Panc1 (cell line): ENCODE measurements at regions of chr5 and their contacts with region 1.

Region 1: GRCh38 chr5:54401515-54401914 is 54.0 kb upstream of the HSPB3 start:
- DNase-seq: no peak
- ATAC-seq: no peak
- H3K4me3 ChIP-seq: no peak overlapping the region
- H3K27ac ChIP-seq: no peak overlapping the region
- H3K4me1 ChIP-seq: no peaks in the 10 kb centered on the region
- H3K27me3 ChIP-seq: no peaks in the 10 kb centered on the region
- CTCF ChIP-seq: no peak

Region 2: DNA sequence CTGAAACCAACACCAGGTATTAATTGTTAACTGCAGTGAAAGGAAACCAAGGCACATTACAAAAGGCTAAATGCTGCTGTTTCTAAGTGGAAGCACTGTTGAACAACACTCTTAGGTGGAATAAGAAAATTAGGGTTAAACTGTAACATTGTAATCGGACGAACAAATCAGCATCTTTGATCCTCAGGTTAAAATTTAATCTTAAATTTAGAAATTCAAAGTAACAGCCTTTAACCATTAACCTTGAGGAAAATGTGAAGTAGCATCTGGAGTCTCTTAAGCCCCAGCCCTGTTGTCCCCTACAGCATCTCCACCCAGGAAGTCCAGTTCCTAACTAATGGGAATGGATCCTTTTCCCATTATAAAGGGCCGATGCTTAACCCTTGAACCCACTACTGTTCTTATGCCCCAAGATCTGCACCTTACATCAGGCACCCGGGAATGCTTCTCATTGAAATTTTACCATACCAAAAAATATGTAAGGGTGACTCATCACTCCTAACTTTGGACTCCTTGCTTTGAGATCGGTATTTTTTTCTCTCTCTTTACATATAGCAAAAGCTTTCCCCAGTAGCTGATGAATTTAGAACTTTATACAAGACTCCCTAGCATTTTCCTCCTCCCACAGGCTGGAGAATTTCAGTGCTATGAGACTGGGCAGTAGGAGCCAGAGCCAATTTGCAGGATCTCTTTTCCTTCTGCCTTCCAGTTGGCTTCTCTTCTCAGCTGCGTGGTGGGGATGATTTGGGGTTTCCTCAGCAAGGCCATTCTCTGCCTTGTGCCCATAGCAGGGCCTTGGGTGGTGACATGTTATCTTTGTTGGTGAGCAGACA is 1444.4 kb before region 1 on chr5:
- CTCF ChIA-PET with region 1: no interaction called
- POLR2A ChIA-PET with region 1: no interaction called
- in situ Hi-C with region 1: no loop called
- intact Hi-C with region 1: loop called (anchors 5 kb)
- DNase-seq: no peak
- ATAC-seq: no peak
- H3K4me3 ChIP-seq: no peak overlapping the region
- H3K27ac ChIP-seq: no peak overlapping the region
- H3K4me1 ChIP-seq: no peaks in the 10 kb centered on the region
- H3K27me3 ChIP-seq: no peaks in the 10 kb centered on the region
- CTCF ChIP-seq: no peak

Region 3: DNA sequence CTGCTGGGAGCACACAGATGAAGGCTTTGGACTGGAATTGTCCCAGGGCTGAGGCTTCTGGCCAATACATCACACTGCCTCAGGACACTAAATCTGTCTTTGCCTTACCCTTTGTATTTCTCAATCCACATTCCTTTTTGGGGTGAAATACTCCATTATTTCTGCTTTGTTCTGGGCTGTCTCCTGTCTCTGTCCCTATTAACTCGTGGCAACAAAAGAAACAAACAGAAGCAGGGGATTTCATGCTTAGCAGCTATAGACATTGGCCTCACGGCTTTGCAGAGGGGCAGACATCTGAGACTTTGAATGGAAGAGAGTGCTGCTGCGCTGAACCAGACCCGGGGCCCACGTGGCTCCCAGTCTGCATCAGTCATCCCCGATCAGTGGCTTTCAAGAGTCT is 220.9 kb before region 1 on chr5:
- CTCF ChIA-PET with region 1: no interaction called
- POLR2A ChIA-PET with region 1: no interaction called
- in situ Hi-C with region 1: no loop called
- intact Hi-C with region 1: no loop called
- DNase-seq: no peak
- ATAC-seq: no peak
- H3K4me3 ChIP-seq: no peak overlapping the region
- H3K27ac ChIP-seq: no peak overlapping the region
- H3K4me1 ChIP-seq: no peaks in the 10 kb centered on the region
- H3K27me3 ChIP-seq: no peaks in the 10 kb centered on the region
- CTCF ChIP-seq: no peak

Region 4: DNA sequence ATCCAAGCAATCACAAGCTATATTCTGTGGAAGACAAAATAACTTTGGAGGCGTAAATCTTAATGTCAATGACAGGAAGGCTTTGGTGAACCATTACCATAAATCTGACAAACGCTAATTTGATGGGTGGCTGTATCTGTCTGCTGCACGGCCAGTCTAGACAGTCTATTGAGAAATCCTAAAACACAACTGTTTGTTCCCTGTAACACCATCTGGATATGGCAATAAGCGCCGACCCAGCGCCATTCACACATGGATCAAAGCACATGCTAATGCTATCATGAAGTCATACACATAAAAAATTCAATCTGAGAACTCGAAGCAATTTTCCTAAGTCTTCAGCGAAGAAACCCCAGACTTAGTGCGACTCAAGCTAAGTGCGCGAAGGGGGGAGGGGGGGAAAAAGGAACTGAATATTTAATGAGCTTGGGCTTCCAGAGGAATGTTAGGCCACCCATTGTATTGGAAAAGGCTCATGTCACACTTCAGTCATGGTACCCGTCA is 186.2 kb before region 1 on chr5:
- CTCF ChIA-PET with region 1: no interaction called
- POLR2A ChIA-PET with region 1: no interaction called
- in situ Hi-C with region 1: no loop called
- intact Hi-C with region 1: no loop called
- DNase-seq: no peak
- ATAC-seq: no peak
- H3K4me3 ChIP-seq: no peak overlapping the region
- H3K27ac ChIP-seq: no peak overlapping the region
- H3K4me1 ChIP-seq: no peaks in the 10 kb centered on the region
- H3K27me3 ChIP-seq: no peaks in the 10 kb centered on the region
- CTCF ChIP-seq: no peak

Region 5: GRCh38 chr5:54991416-54991815 is 589.9 kb after region 1 on chr5:
- CTCF ChIA-PET with region 1: interaction called, 17 read pairs
- POLR2A ChIA-PET with region 1: no interaction called
- in situ Hi-C with region 1: no loop called
- intact Hi-C with region 1: no loop called
- DNase-seq: no peak
- ATAC-seq: no peak
- H3K4me3 ChIP-seq: no peak overlapping the region
- H3K27ac ChIP-seq: no peak overlapping the region
- H3K4me1 ChIP-seq: no peaks in the 10 kb centered on the region
- H3K27me3 ChIP-seq: peaks cover 3% of the 10 kb centered on the region
- CTCF ChIP-seq: no peak

Region 6: DNA sequence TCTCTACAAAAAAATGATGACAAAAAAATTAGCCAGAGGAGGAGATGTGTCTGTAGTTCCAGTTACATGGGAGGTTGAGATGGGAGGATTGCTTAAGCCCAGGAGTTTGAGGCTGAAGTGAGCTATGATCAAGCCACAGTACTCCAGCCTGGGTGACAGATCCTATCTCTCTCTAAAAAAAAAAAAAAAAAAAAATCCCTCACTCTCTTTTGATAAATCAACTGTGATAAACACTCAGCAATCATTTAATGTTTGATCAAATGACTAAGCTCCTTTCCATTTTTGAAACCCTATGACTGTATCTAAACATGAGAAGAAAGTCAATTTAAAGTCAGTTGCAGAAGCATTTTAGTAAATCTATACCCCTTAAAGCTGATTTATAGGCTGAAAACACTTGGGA is 1705.3 kb after region 1 on chr5:
- CTCF ChIA-PET with region 1: no interaction called
- POLR2A ChIA-PET with region 1: interaction called, 13 read pairs
- in situ Hi-C with region 1: no loop called
- intact Hi-C with region 1: no loop called
- DNase-seq: no peak
- ATAC-seq: no peak
- H3K4me3 ChIP-seq: no peak overlapping the region
- H3K27ac ChIP-seq: no peak overlapping the region
- H3K4me1 ChIP-seq: no peaks in the 10 kb centered on the region
- H3K27me3 ChIP-seq: no peaks in the 10 kb centered on the region
- CTCF ChIP-seq: no peak